H1 (cell line): ENCODE measurements at regions of chr1 and their contacts with region 1.

Region 1: DNA sequence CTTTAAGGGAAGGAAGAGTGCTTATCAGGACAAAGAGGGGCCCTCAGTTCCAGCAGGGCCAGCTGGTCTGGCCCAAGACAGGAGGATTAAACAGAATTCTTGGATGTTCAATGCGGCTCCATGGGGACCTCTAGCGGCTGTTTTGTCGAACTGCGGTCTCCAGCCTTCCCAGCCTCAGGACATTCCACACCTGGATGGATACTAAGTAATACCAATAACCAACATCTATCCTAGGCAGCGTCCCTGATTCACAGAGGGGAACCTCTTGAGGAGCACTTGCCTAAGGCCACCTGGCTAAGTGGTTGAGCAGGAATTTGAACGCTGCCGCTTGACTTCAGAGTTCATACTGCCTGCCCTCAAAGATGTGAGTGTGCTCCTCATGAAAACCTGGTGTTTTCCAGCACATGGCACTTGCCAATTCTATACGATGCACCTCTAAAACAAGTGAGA is 15.5 kb upstream of the CD247 start:
- DNase-seq: peak; percentile 56 to 90
- H3K4me3 ChIP-seq: no peak overlapping the region
- H3K27ac ChIP-seq: no peak overlapping the region
- H3K4me1 ChIP-seq: peaks cover 0 to 3% (median 0%) of the 10 kb centered on the region in 4 experiments; a peak in 2 of 7 replicates
- H3K27me3 ChIP-seq: no peaks in the 10 kb centered on the region
- CTCF ChIP-seq: peak; percentile 79 to 91 (median 84)
- EP300 ChIP-seq: no peak
- POLR2A ChIP-seq: no peak
- RAD21 ChIP-seq: peak; percentile 95 to 98

Region 2: DNA sequence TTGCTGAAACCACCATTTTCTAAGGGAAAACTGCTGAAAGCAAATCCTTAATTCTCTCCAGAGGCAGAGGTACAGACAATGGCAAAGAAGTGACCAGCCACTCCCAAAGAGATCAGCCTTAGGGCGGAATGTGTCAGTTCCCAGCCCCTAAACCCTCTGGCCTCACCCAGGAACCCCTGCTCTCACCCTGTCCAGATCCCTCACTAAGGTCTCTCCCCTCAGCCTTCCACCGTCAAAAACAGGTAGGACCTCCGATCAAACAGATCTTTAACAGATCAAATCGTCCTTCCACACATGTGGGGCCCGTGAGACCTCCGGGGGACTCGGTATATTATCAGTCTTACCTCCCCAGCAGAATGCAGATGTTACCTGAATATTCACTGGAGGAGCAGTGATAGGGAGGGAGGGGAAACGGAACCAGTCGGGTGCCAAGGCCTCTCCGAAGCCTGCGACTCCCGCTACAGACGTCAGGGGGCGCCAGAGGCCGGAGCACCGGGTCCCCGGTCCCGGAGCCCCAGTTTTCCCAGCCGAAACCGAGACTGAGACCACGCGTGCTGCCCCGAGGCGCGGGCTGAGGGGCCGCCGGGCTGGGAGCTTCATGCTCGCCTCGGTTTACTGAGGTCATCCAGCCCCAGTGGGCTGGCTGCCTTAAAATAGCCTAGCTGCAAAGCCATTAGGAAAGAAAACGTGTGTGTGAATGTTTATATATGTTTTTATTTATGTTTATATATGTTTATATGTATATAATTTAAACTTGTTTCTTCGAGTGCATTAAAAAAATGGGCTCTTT is 467.3 kb before region 1 on chr1:
- CTCF ChIA-PET with region 1: interaction called, 11 read pairs
- POLR2A ChIA-PET with region 1: no interaction called
- DNase-seq: peak; percentile 29 to 97
- H3K4me3 ChIP-seq: peak overlapping the region in 2 of 4 experiments; percentile 14 to 44; a peak in 4 of 8 replicates
- H3K27ac ChIP-seq: no peak overlapping the region
- H3K4me1 ChIP-seq: peaks cover 0 to 2% (median 0%) of the 10 kb centered on the region in 4 experiments; a peak in 1 of 7 replicates
- H3K27me3 ChIP-seq: no peaks in the 10 kb centered on the region
- CTCF ChIP-seq: peak; percentile 84 to 94 (median 93)
- EP300 ChIP-seq: no peak
- POLR2A ChIP-seq: no peak
- RAD21 ChIP-seq: peak; percentile 97 to 100

Region 3: GRCh38 chr1:167442124-167442848 is 91.6 kb before region 1 on chr1:
- CTCF ChIA-PET with region 1: interaction called, 74 read pairs
- POLR2A ChIA-PET with region 1: interaction called, 3 read pairs
- DNase-seq: peak in 1 of 2 experiments; percentile 92
- H3K4me3 ChIP-seq: no peak overlapping the region
- H3K27ac ChIP-seq: no peak overlapping the region
- H3K4me1 ChIP-seq: peaks cover 2 to 8% (median 4%) of the 10 kb centered on the region in 4 experiments; a peak in 6 of 7 replicates
- H3K27me3 ChIP-seq: peaks cover 3 to 35% (median 26%) of the 10 kb centered on the region in 4 experiments
- CTCF ChIP-seq: peak; percentile 91 to 97 (median 96)
- EP300 ChIP-seq: no peak
- POLR2A ChIP-seq: no peak
- RAD21 ChIP-seq: peak; percentile 98 to 100

Region 4: GRCh38 chr1:167454894-167455785 is 78.7 kb before region 1 on chr1:
- CTCF ChIA-PET with region 1: interaction called, 31 read pairs
- POLR2A ChIA-PET with region 1: interaction called, 3 read pairs
- DNase-seq: peak in 1 of 2 experiments; percentile 79
- H3K4me3 ChIP-seq: peak overlapping the region; percentile 61 to 67 (median 64)
- H3K27ac ChIP-seq: no peak overlapping the region
- H3K4me1 ChIP-seq: peaks cover 0 to 15% (median 4%) of the 10 kb centered on the region in 4 experiments; a peak in 6 of 7 replicates
- H3K27me3 ChIP-seq: peaks cover 0 to 28% (median 24%) of the 10 kb centered on the region in 4 experiments; a peak in 6 of 7 replicates
- CTCF ChIP-seq: no peak
- EP300 ChIP-seq: no peak
- POLR2A ChIP-seq: no peak
- RAD21 ChIP-seq: peak in 1 of 2 experiments; percentile 2; a peak in 1 of 4 replicates

Region 5: DNA sequence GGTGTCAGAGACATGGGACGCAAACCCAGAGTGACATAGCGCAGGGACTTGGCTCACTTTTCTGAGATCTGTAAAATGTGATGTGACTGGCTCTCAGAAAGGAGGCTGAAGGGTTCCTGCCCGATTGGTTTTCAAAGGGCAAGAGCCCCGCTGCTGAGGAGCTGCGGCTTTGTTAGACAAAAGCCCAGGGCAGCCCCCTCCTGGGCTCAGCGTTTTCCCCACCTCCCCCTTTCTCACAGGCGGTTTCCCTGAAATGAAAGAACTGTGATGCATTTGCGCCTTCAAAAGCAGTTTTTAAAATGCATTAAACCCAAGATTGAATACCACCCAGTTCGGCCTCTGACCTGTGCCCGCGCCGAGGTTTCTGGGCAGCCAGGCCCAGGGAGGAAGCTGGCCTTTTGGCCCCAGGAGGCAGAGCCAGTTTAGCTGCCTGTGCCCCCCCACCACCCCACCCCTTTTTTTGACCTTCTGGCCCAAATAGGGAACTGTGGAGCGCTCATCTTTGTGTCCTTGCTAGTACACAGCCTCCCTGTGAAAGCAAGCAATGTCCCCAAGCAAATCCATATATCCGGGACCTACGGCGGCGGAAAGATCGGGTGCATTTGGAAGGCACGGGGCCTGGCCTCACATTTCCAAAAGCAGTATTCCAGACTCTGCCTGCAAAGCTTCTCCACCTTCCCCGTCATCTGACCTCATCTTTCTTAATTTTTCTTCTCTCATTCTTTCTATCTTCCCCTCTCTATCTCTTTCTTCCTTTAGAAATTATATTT is 44.1 kb before region 1 on chr1:
- CTCF ChIA-PET with region 1: interaction called, 18 read pairs
- POLR2A ChIA-PET with region 1: interaction called, 3 read pairs
- DNase-seq: peak; percentile 41 to 73
- H3K4me3 ChIP-seq: peak overlapping the region in 3 of 4 experiments; percentile 8 to 45 (median 12); a peak in 4 of 8 replicates
- H3K27ac ChIP-seq: peak overlapping the region; percentile 57
- H3K4me1 ChIP-seq: peaks cover 3 to 31% (median 18%) of the 10 kb centered on the region in 4 experiments
- H3K27me3 ChIP-seq: 0 out of 7 replicates have a peak, but pooled peaks cover 0 to 3% (median 0%) of the 10 kb centered on the region in 4 experiments
- CTCF ChIP-seq: no peak
- EP300 ChIP-seq: no peak; a peak in 1 of 3 replicates
- POLR2A ChIP-seq: no peak
- RAD21 ChIP-seq: 0 out of 4 replicates have a peak, but pooled peaks of 1 of the 2 experiments have one; percentile 3

Region 6: DNA sequence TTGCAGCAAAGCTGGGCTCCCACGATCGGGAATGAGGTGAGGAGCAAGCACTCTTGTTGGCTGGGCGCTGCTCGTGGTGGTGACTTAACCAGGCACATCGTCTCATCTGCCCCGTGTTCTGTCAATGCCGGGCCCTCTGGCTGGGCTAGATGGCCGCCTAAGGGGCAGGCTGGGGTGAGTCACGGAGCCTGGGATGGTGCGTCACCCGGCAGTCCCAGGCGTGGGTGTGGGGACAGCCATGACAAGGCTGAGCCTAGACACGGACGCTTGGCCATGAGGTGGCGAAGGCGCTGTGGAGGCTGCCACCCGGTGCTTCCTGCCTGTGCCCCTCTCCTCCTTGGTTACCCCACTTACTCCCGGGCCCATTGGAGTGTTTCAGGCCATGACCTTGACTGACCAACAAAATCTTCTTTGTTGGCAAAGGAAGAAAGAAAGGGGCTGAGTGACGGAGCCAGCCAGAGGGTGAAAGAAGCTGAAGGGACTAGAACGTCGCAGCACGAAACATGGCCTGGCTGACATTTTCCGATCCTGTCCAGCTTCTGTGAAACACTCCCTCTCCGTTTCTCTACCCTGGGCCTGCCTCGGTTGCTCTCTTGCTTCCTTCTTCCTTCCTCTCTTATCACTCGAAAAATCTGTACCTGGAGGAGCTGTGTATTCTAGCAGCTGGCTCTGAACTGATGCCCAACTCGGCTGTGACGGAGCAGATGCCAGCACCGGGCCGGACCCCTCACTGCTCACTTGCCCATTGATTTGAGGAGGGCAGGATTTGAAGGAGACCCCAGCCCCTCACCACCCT is 16.1 kb before region 1 on chr1:
- CTCF ChIA-PET with region 1: interaction called, 43 read pairs
- POLR2A ChIA-PET with region 1: no interaction called
- DNase-seq: peak in 1 of 2 experiments; percentile 43
- H3K4me3 ChIP-seq: no peak overlapping the region
- H3K27ac ChIP-seq: no peak overlapping the region
- H3K4me1 ChIP-seq: no peaks in the 10 kb centered on the region
- H3K27me3 ChIP-seq: no peaks in the 10 kb centered on the region
- CTCF ChIP-seq: no peak
- EP300 ChIP-seq: no peak
- POLR2A ChIP-seq: no peak
- RAD21 ChIP-seq: no peak

Region 7: GRCh38 chr1:167553136-167554027 is 19.5 kb after region 1 on chr1 and contains the start of gene CREG1:
- CTCF ChIA-PET with region 1: interaction called, 11 read pairs
- POLR2A ChIA-PET with region 1: interaction called, 3 read pairs
- DNase-seq: peak; percentile 78 to 93
- H3K4me3 ChIP-seq: peak within 1 kb of the TSS; percentile 65 to 84 (median 70)
- H3K27ac ChIP-seq: 0 out of 2 replicates have a peak within 1 kb of the TSS, but pooled peaks have one; percentile 12
- H3K4me1 ChIP-seq: no peaks in the 10 kb centered on the region; a peak in 1 of 7 replicates
- H3K27me3 ChIP-seq: no peaks in the 10 kb centered on the region; a peak in 1 of 7 replicates
- CTCF ChIP-seq: no peak
- EP300 ChIP-seq: no peak
- POLR2A ChIP-seq: peak; percentile 84 to 94
- RAD21 ChIP-seq: no peak
- total RNA-seq, gene CREG1: 28.7 and 30.1 TPM in 2 replicates

Region 8: DNA sequence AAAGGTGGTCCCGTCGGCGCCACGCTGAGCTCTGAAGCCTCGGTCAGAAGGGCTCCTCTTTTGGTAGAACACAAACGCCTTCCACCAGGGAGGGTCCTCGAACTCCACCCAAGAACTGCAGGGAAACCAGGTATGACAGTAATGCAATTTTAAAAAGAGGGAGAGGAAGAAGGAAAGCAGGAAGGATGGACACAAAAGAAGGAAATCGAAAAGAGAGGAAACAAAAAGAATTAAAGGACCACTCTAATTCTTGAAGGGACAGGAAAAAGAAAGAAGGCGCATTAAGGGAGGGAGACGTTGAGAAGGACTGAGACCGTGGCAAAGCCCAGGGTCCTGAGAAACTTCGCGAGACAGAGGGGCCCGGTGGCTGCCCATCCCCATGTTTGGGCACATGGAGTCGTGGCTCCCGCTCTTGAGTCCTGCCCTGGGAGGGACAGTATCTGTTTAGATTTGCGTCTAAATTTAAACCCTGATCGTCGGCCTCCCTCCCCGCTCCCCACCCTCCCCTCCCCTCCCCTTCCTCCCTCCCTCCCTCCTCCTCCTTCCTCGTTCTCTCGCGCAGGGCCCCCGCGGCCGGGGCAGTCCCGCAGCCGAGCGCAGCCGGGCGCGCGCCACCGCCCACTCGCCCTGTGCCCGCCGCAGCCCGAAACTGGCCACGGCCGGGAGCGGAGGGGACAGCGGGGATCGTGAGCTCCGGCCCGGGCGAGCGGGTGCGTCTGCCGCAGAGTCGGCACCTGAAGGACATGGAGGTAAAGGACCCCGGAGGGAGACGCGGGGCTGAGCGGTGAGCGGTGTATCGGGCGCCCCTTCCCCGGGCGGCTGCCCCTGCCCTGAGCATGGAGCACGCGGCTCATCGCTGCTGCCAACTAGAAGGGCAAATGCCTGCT is 96.0 kb after region 1 on chr1 and contains the start of gene RCSD1:
- CTCF ChIA-PET with region 1: no interaction called
- POLR2A ChIA-PET with region 1: no interaction called
- DNase-seq: peak in 1 of 2 experiments; percentile 68
- H3K4me3 ChIP-seq: peak within 1 kb of the TSS; percentile 49 to 80 (median 65)
- H3K27ac ChIP-seq: no peak within 1 kb of the TSS
- H3K4me1 ChIP-seq: peaks cover 0 to 10% (median 5%) of the 10 kb centered on the region in 4 experiments; a peak in 6 of 7 replicates
- H3K27me3 ChIP-seq: peaks cover 20 to 48% (median 46%) of the 10 kb centered on the region in 4 experiments
- CTCF ChIP-seq: no peak
- EP300 ChIP-seq: no peak
- POLR2A ChIP-seq: no peak
- RAD21 ChIP-seq: no peak
- total RNA-seq, gene RCSD1: 0.69 and 0.98 TPM in 2 replicates